Activated T-helper 2 cell treated with anti-CD3 and anti-CD28 coated beads, Interferon-gamma antibody, Interleukin-2, Interleukin-4, amounts not matched to agents 10 μg/mL and 5 μg/mL and 100 μg/mL, durations not matched to agents 14 hours and 24 hours and 36 hours (primary cell): ENCODE measurements at regions of chr9 and their contacts with region 1.

Region 1: GRCh38 chr9:124202447-124202971 is 55.2 kb upstream of the NEK6 start:
- DNase-seq: peak; percentile 85
- H3K4me3 Mint-ChIP-seq: peak overlapping the region; percentile 82
- H3K27ac Mint-ChIP-seq: peak overlapping the region; percentile 93
- H3K4me1 Mint-ChIP-seq: peaks cover 78% of the 10 kb centered on the region
- H3K27me3 Mint-ChIP-seq: no peaks in the 10 kb centered on the region

Region 2: DNA sequence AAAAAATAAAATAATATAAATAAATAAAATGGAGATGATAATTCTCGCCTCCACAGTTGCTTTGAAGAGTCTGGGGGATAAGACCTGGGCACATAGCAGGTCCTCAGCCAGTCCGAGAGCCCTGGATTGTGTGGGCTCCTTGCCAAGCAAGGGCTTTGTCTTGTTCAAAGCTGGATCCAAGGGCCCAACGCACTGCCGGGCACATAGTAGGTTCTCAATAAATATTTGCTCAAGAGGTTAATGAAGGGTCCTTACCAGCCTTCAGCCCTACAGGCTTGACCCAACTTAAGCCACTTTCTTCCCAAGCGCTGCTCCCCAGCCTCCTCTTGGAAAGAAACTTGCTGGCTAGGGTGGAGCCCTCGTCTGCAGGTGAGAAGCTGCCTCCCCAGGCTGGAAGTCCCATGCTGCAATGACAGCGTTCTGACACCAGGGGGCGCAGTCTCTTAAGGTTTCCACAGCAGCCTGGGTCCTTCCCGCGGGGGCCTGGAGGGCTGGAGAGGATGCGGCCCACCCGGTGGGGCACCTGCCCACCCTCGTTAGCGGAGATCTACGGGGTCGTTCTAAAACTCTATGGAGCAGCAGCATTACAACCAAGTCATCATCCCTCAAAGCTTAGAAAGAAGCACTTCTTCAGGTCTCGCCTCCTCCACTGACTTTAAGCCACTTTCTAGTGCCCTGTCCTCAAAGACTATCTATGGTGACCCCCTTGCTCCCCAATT is 75.8 kb before region 1 on chr9:
- intact Hi-C with region 1: loop called (anchors 5 kb)
- DNase-seq: peak; percentile 67
- H3K4me3 Mint-ChIP-seq: no peak overlapping the region
- H3K27ac Mint-ChIP-seq: no peak overlapping the region
- H3K4me1 Mint-ChIP-seq: peaks cover 8% of the 10 kb centered on the region
- H3K27me3 Mint-ChIP-seq: peaks cover 4% of the 10 kb centered on the region

Region 3: DNA sequence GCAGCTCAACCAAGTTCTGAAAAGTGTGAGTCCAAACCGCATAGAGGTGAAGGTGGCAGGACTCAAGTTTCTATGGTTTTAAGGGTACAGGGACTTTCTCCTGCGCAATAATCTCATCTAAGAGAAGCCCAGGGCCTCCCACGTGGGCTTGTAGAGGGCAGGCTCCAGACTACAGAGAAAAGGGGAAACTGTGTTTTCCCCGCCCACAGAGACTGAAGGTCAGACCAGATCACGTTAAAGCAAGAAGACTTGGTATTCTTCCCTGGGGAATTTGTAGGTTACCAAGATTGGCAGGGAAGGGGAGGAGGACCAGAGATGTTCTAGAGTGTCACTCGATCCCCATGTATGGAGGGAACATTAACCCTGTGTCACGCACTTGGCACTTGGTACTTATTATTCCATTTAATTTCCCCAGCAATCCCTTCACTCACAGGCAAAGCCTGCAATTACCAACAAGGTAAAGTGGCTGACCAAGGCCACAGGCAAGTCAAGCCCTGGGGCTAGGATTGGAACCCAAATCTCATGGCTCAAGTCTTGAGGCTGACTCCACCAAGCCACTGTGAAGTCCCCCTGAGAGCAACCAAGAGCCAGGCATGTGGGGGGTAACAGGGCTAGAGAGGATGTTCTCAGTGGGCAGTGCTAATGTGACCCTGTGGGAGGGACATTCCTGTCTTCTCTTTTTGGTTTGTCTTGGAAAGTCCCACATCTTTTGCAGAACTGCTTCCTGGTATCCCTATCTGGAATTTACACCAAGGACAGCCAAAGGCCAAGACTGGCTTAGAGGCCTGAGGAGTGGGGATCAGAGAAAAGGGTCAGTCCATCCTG is 37.0 kb after region 1 on chr9:
- intact Hi-C with region 1: loop called (anchors 2 kb)
- DNase-seq: no peak
- H3K4me3 Mint-ChIP-seq: no peak overlapping the region
- H3K27ac Mint-ChIP-seq: peak overlapping the region; percentile 54
- H3K4me1 Mint-ChIP-seq: peaks cover 47% of the 10 kb centered on the region
- H3K27me3 Mint-ChIP-seq: peaks cover 1% of the 10 kb centered on the region

Region 4: DNA sequence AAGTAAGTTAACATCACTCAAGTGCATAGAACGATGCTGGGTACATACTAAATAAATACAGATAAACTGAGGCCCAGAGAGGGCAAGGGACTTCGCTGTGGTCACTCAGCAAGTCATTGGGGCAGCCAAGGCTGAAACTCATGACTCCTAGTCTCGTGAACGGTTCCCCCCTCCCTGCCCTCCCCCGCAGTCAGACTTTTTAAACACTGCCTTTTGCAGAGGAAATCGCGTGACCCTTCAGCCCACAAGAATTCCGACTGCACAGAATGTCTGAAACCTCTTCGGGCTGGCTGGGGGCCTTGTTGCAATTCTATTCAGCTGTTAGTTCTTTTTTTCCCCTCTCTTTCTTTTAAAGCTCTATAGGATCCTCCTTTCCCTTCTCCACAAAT is 83.4 kb after region 1 on chr9:
- intact Hi-C with region 1: loop called (anchors 1 kb)
- DNase-seq: peak; percentile 27
- H3K4me3 Mint-ChIP-seq: peak overlapping the region; percentile 77
- H3K27ac Mint-ChIP-seq: peak overlapping the region; percentile 97
- H3K4me1 Mint-ChIP-seq: peaks cover 47% of the 10 kb centered on the region
- H3K27me3 Mint-ChIP-seq: no peaks in the 10 kb centered on the region

Region 5: DNA sequence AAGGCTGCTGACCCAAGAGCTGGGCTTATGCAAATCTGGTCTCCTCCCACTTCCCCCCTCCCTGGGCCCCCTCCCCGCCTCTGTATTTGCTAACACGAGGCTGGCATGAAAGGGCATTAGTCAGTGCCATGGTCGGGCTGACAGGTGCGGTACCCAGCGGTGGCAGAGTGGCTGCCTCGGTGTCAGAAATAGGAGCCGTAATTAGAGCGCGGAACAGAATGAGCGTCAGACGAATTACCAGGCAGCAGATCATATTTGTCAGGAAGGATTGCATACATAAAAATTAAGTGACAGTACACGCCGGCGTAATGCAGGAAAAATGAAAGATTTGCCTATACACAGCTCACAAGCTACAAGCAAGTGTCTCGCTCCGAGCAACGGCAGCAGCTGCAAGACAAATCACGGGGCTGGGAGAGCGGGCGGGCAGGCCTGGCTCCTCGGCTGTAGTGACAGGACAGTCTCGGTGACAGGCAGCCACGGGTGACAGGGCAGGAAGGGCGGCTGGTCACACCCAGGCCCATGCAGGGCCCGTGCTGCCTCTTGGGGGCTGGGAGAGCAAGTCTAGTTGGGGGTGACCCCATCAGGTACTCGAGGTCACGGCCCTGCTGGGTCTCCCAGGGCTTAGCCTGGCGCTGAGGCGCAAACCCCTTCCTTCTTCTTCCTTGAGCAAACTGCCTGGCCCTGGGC is 127.6 kb after region 1 on chr9:
- intact Hi-C with region 1: no loop called
- DNase-seq: no peak
- H3K4me3 Mint-ChIP-seq: no peak overlapping the region
- H3K27ac Mint-ChIP-seq: no peak overlapping the region
- H3K4me1 Mint-ChIP-seq: no peaks in the 10 kb centered on the region
- H3K27me3 Mint-ChIP-seq: no peaks in the 10 kb centered on the region